ENCODE measurements at regions of chr13 and their contacts with region 1.

Region 1: GRCh38 chr13:35744566-35745178 is 268.2 kb upstream of the MAB21L1 start:
- DNase-seq: no peak
- H3K4me3 ChIP-seq: no peak overlapping the region
- H3K27ac ChIP-seq: no peak overlapping the region
- H3K4me1 ChIP-seq: no peaks in the 10 kb centered on the region
- H3K27me3 ChIP-seq: no peaks in the 10 kb centered on the region
- CTCF ChIP-seq: no peak

Region 2: DNA sequence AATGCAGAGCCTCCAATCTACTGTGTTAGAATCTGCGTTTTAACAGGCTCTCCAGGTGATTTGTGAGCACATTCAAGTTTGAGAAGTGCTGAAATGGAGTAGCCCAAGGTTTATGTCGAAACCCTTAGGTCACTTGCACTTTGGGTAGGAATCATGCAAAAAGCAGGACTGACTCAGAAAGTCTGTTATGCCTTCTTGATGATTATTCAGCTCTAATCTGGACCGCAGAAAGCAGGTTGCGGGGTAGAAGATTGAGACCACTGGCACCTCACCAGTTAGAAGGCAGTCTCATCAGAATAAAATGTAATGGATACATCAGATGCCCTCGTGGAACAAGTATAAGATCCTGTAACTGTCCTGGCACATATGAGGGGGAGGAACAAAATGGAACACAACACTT is 60.2 kb after region 1 on chr13:
- dilution Hi-C with region 1: loop called (anchors 10 kb)
- DNase-seq: no peak
- H3K4me3 ChIP-seq: no peak overlapping the region
- H3K27ac ChIP-seq: no peak overlapping the region
- H3K4me1 ChIP-seq: no peaks in the 10 kb centered on the region
- H3K27me3 ChIP-seq: no peaks in the 10 kb centered on the region
- CTCF ChIP-seq: no peak